ENCODE measurements at regions of chr11 and their contacts with region 1.

Region 1: GRCh38 chr11:101880222-101880621 is 34.6 kb upstream of the CEP126 start:
- DNase-seq: no peak
- H3K4me3 Mint-ChIP-seq: no peak overlapping the region
- H3K27ac Mint-ChIP-seq: no peak overlapping the region
- H3K4me1 Mint-ChIP-seq: no peaks in the 10 kb centered on the region
- H3K27me3 Mint-ChIP-seq: peaks cover 4% of the 10 kb centered on the region

Region 2: GRCh38 chr11:101738452-101738851 is 141.8 kb before region 1 on chr11:
- CTCF ChIA-PET with region 1: no interaction called
- POLR2A ChIA-PET with region 1: no interaction called
- DNase-seq: no peak
- H3K4me3 Mint-ChIP-seq: no peak overlapping the region
- H3K27ac Mint-ChIP-seq: no peak overlapping the region
- H3K4me1 Mint-ChIP-seq: no peaks in the 10 kb centered on the region
- H3K27me3 Mint-ChIP-seq: no peaks in the 10 kb centered on the region

Region 3: DNA sequence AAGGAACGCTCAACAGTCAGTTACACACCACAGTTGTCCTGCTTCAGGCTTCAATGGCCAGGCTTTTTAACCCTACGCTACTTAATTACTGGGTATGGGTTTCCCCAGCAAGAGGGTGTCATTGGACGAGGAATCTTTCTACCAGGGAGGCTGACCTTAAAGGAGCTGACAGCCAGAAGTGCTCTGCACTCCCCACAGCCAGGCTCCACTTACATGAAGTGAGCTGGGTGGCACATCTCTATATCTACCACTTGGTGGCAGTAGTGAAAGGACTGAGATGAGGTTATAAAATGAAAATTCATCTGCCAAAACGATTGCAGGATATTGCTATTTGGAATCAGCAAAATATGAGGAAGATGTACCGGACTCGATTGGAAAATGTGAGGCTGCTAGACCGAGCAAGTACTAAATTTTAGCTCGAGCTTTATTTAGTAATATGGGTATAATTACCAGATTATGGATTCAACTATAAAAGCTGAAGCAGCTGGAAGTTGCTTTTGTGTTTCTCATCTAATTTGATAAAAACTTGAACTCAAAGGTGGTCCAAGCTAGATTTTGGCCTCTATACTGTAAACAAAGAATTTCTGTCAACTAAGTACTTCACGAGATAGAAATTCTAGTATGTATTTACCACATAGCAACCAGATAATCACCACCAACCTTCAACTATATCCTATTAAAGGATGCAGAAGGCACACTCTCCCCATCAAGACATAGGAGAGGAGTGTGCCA is 19.4 kb before region 1 on chr11:
- CTCF ChIA-PET with region 1: interaction called, 11 read pairs
- POLR2A ChIA-PET with region 1: no interaction called
- DNase-seq: peak; percentile 17
- H3K4me3 Mint-ChIP-seq: no peak overlapping the region
- H3K27ac Mint-ChIP-seq: no peak overlapping the region
- H3K4me1 Mint-ChIP-seq: no peaks in the 10 kb centered on the region
- H3K27me3 Mint-ChIP-seq: peaks cover 9% of the 10 kb centered on the region

Measured in activated CD4-positive, alpha-beta memory T cell treated with anti-CD3 and anti-CD28 coated beads, Interleukin-2, amount 10 ng/mL, durations not matched to agents 7 days and 5 days (primary cell).